ENCODE measurements at regions of chr18 and their contacts with region 1.

Region 1: DNA sequence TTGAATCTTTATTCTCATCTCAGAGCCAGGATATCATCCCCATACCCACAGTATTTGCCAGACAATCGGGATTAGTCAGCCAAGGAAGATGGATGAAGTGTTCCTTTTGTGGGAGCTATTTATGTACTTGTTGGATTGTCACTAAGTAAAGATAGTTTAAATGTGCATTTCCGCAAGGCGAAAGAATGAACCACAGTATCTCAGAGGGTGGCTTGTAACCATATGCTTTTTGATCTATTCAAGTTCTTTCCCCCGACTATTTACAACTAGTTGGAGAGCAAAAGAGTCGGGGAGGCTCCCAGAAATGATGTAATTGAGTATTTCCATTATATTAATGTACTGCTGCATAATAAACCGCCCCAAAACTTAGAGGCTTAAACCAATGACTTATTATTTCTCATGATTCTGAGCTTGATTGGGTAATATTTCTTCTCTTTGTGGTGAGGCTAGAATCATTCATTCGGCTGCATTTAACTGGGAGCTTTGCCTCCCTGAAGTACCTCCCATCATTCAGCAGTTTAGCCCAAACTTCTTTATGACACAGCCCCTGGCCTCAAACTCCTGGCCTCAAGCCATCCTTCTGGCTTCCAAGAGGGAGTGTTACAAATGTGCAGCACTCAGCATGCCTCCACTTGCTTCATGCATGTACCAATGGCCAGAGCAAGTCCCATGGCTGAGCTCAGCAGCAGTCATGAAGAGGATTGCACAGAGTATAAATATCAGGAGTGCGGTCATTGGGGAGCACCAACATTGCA is 423.7 kb downstream of the METTL4 start:
- DNase-seq: peak in 1 of 2 experiments; percentile 23
- H3K4me3 ChIP-seq: no peak overlapping the region
- H3K4me1 ChIP-seq: no peaks in the 10 kb centered on the region
- H3K27me3 ChIP-seq: no peaks in the 10 kb centered on the region

Region 2: GRCh38 chr18:2547477-2548087 is 399.9 kb after region 1 on chr18:
- in situ Hi-C with region 1: loop called (anchors 25 kb)
- DNase-seq: peak in 1 of 2 experiments; percentile 52
- H3K4me3 ChIP-seq: no peak overlapping the region
- H3K4me1 ChIP-seq: no peaks in the 10 kb centered on the region
- H3K27me3 ChIP-seq: no peaks in the 10 kb centered on the region

Measured in HAP-1 (cell line).